ENCODE measurements at regions of chr10 and their contacts with region 1.

Region 1: DNA sequence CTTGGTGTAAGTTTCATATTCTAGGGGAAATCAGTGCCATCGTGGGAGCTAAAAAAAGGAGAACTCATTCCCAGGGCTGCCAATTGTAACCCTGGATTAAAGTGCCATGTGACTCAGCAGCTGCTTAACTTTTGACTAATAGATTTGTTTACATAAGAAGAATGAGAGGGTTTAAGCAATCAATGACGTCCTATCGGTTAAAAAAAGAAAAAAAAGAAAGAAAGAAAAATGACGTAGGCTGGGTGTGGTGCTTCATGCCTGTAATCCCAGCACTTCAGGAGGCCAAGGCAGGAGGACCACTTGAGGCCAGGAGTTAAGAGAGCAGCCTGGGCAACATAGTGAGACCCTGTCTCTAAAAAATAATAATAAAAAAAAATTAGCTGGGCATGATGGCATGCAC is 116.2 kb upstream of the AFAP1L2 start:
- DNase-seq: peak in 3 of 14 experiments; percentile 29 to 43 (median 41)
- ATAC-seq: peak; percentile 19
- H3K4me3 ChIP-seq: no peak overlapping the region
- H3K4me3 Mint-ChIP-seq: peak overlapping the region; percentile 82
- H3K27ac ChIP-seq: peak overlapping the region; percentile 32 to 95
- H3K27ac Mint-ChIP-seq: peak overlapping the region; percentile 96
- H3K4me1 ChIP-seq: peaks cover 81% of the 10 kb centered on the region
- H3K4me1 Mint-ChIP-seq: peaks cover 98% of the 10 kb centered on the region
- H3K27me3 ChIP-seq: no peaks in the 10 kb centered on the region
- H3K27me3 Mint-ChIP-seq: no peaks in the 10 kb centered on the region
- CTCF ChIP-seq: no peak

Region 2: GRCh38 chr10:114482480-114483304 is 37.8 kb before region 1 on chr10:
- CTCF ChIA-PET with region 1: interaction called, 4 read pairs
- POLR2A ChIA-PET with region 1: interaction called, 4 read pairs
- intact Hi-C with region 1: loop called in 1 of 2 experiments (anchors 5 kb)
- DNase-seq: no peak
- ATAC-seq: no peak
- H3K4me3 ChIP-seq: no peak overlapping the region
- H3K4me3 Mint-ChIP-seq: no peak overlapping the region
- H3K27ac ChIP-seq: no peak overlapping the region
- H3K27ac Mint-ChIP-seq: peak overlapping the region; percentile 76
- H3K4me1 ChIP-seq: peaks cover 5% of the 10 kb centered on the region
- H3K4me1 Mint-ChIP-seq: peaks cover 87% of the 10 kb centered on the region
- H3K27me3 ChIP-seq: no peaks in the 10 kb centered on the region
- H3K27me3 Mint-ChIP-seq: no peaks in the 10 kb centered on the region
- CTCF ChIP-seq: no peak

Measured in CD4-positive, alpha-beta T cell (primary cell).